ENCODE measurements at regions of chr22 and their contacts with region 1.

Region 1: DNA sequence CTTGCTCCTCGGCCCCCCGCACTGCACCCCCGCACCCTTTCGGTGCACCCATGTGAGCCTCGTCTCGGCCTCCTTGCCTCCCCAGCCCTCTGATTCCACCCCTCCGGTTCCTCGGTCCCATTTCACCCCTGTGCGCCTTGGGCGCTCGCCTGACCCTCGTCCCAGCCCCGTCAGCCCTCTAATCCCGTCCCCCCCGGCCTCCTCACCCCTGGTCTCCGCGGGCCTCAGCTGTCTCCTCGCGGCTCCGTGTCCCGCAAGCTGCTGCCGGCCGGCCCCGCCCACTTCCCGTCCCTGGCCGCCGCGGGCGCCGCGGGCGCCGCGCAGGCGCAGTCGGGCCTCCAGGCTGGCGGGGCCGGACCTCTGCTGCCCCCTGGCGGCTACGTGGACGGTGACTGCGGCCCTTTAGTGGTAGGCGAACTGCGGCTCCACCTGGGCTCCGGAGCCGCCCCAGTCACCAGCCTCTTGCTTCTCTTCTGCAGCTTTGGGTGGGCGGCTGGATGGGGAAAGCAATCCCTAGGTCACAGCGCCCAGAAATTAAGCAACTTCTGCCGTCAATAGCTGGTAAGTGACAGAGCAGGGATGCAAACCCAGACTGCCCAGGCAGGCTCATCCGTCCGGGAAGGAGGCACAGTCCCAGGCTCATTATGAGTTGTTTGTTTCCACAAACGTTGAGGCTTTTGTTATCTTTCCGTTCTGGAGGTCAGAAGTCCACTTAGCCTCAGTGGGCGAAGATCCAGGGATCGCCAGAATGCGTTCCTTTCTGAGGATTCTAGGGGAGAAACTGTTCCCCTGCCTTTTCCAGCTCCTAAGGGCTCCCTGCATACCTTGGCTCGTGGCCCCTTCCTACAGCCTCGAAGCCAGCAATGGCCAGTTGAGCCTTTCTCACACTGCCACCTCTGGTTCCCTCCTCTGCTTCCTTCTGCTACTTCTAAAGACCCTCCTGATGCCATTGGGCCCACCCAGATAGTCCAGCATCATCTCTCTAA is at the start of gene PPM1F:
- DNase-seq: peak; percentile 81 to 99 (median 92)
- ATAC-seq: peak; percentile 89 to 90
- H3K4me3 Mint-ChIP-seq: peak within 1 kb of the TSS; percentile 78 to 92 (median 86)
- H3K27ac Mint-ChIP-seq: peak within 1 kb of the TSS; percentile 37 to 91 (median 82)
- H3K4me1 Mint-ChIP-seq: peaks cover 8 to 34% (median 27%) of the 10 kb centered on the region in 4 donors
- H3K27me3 Mint-ChIP-seq: no peaks in the 10 kb centered on the region
- polyA plus RNA-seq, gene PPM1F: 8.3 to 9.9 (median 9.6) TPM

Region 2: DNA sequence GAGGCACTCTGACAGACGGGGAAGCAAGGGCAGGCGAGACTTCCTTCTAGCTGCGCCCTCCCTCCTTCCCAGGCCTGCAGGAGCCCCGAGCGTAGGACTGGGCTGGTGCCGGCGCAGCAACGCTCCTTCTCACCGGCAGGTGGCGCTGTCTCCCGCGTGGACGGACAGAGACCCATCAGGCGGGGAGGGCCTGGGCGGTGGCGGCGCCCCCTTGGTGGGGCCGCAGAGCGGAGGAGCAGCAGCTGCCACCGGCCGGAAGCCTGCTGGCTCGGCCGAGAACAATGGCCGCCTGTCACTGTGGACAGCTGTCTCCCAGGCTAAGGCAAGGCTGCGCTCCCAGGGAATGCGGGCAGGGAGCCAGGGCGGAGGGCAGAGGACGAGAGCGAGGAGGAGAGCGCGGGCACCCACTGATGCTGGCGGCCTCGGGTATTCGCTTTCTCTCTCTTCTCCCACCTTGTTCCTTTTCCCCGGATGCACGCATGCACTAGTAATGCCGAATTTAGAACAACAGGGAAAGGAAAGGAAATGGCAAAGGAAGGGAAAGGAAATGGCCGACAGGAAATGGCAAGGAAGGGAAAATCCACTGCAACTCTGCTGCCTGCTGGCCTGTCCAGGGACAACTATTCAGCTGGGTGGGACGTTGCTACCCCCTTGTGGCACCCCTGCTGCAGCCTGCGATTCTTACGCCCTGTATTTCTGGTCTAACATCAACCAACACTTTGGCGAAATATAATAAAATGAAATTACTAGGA is 14.6 kb before region 1 on chr22:
- POLR2A ChIA-PET with region 1: interaction called, 16 read pairs
- DNase-seq: peak; percentile 80 to 96 (median 89)
- ATAC-seq: peak; percentile 98 to 99
- H3K4me3 Mint-ChIP-seq: peak overlapping the region; percentile 75 to 89 (median 84)
- H3K27ac Mint-ChIP-seq: peak overlapping the region; percentile 72 to 92 (median 88)
- H3K4me1 Mint-ChIP-seq: peaks cover 23 to 59% (median 37%) of the 10 kb centered on the region in 4 donors
- H3K27me3 Mint-ChIP-seq: no peaks in the 10 kb centered on the region

Measured in naive thymus-derived CD8-positive, alpha-beta T cell (primary cell).